Activated naive CD8-positive, alpha-beta T cell treated with anti-CD3 and anti-CD28 coated beads, Interleukin-2, amount 10 ng/mL, durations not matched to agents 7 days and 5 days (primary cell): ENCODE measurements at regions of chr10 and their contacts with region 1.

Region 1: GRCh38 chr10:3776796-3777571 is 8.0 kb downstream of the KLF6 start:
- DNase-seq: no peak
- ATAC-seq: peak; percentile 34
- H3K4me3 Mint-ChIP-seq: peak overlapping the region; percentile 68
- H3K27ac Mint-ChIP-seq: peak overlapping the region; percentile 73
- H3K4me1 Mint-ChIP-seq: peaks cover 50% of the 10 kb centered on the region
- H3K27me3 Mint-ChIP-seq: no peaks in the 10 kb centered on the region

Region 2: GRCh38 chr10:3605882-3606281 is 171.1 kb before region 1 on chr10:
- POLR2A ChIA-PET with region 1: no interaction called
- DNase-seq: no peak
- ATAC-seq: no peak
- H3K4me3 Mint-ChIP-seq: no peak overlapping the region
- H3K27ac Mint-ChIP-seq: no peak overlapping the region
- H3K4me1 Mint-ChIP-seq: no peaks in the 10 kb centered on the region
- H3K27me3 Mint-ChIP-seq: peaks cover 23% of the 10 kb centered on the region

Region 3: GRCh38 chr10:3757638-3758490 is 19.1 kb before region 1 on chr10:
- POLR2A ChIA-PET with region 1: interaction called, 23 read pairs
- DNase-seq: no peak
- ATAC-seq: peak; percentile 94
- H3K4me3 Mint-ChIP-seq: peak overlapping the region; percentile 69
- H3K27ac Mint-ChIP-seq: peak overlapping the region; percentile 88
- H3K4me1 Mint-ChIP-seq: peaks cover 40% of the 10 kb centered on the region
- H3K27me3 Mint-ChIP-seq: no peaks in the 10 kb centered on the region

Region 4: GRCh38 chr10:3763035-3763456 is 13.9 kb before region 1 on chr10:
- POLR2A ChIA-PET with region 1: interaction called, 23 read pairs
- DNase-seq: no peak
- ATAC-seq: no peak
- H3K4me3 Mint-ChIP-seq: no peak overlapping the region
- H3K27ac Mint-ChIP-seq: no peak overlapping the region
- H3K4me1 Mint-ChIP-seq: peaks cover 48% of the 10 kb centered on the region
- H3K27me3 Mint-ChIP-seq: no peaks in the 10 kb centered on the region